B cell (primary cell): ENCODE measurements at regions of chr9 and their contacts with region 1.

Region 1: DNA sequence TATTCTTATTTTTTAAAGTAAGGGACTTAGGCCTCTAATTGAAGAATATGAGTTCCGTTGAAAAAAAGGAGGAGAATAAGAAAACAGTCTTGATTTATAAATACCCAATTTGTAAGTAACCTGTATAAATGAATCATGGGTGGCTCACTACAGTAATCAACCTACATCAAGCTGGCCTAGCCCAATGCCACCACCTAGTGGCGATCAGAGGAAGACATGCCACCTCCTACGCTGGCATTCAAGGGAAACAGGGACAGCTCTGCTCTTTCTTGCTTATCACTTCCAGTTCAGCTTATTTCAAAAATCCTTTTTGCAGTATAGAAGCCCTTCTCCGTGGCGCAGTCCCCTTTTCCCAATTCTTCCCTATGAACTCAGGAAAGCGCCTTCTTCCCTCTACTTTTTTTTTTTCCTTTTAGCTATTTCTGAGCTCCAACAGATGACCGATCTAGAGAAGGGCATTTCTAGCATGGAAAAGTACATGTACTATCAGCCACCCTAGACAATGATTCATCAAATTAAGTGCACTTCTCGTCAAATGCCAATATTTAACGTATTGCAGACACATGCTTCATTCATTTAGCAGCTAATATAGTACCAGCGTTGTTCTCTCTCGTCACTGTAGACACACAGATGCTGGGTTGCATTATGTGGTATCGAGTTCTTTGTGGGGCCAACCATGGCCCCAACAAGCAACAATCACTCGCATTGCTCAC is 28.3 kb downstream of the PTPN3 start:
- DNase-seq: peak; percentile 65
- ATAC-seq: peak; percentile 84
- H3K4me3 ChIP-seq: no peak overlapping the region
- H3K4me3 Mint-ChIP-seq: no peak overlapping the region
- H3K27ac ChIP-seq: no peak overlapping the region
- H3K27ac Mint-ChIP-seq: no peak overlapping the region
- H3K4me1 ChIP-seq: no peaks in the 10 kb centered on the region
- H3K4me1 Mint-ChIP-seq: no peaks in the 10 kb centered on the region
- H3K27me3 ChIP-seq: peaks cover 0 to 6% (median 4%) of the 10 kb centered on the region in 4 experiments
- H3K27me3 Mint-ChIP-seq: peaks cover 35% of the 10 kb centered on the region
- CTCF ChIP-seq: peak; percentile 93

Region 2: GRCh38 chr9:109244157-109245132 is 225.4 kb before region 1 on chr9:
- CTCF ChIA-PET with region 1: interaction called, 13 read pairs
- POLR2A ChIA-PET with region 1: no interaction called
- intact Hi-C with region 1: loop called (anchors 1 kb)
- DNase-seq: peak; percentile 72
- ATAC-seq: peak; percentile 81
- H3K4me3 ChIP-seq: no peak overlapping the region
- H3K4me3 Mint-ChIP-seq: no peak overlapping the region
- H3K27ac ChIP-seq: no peak overlapping the region
- H3K27ac Mint-ChIP-seq: no peak overlapping the region
- H3K4me1 ChIP-seq: no peaks in the 10 kb centered on the region
- H3K4me1 Mint-ChIP-seq: no peaks in the 10 kb centered on the region
- H3K27me3 ChIP-seq: peaks cover 0 to 19% (median 4%) of the 10 kb centered on the region in 4 experiments
- H3K27me3 Mint-ChIP-seq: peaks cover 22% of the 10 kb centered on the region
- CTCF ChIP-seq: peak; percentile 92

Region 3: GRCh38 chr9:109440797-109441287 is 29.0 kb before region 1 on chr9:
- CTCF ChIA-PET with region 1: interaction called, 7 read pairs
- POLR2A ChIA-PET with region 1: no interaction called
- intact Hi-C with region 1: loop called (anchors 1 kb)
- DNase-seq: peak; percentile 60
- ATAC-seq: peak; percentile 79
- H3K4me3 ChIP-seq: no peak overlapping the region
- H3K4me3 Mint-ChIP-seq: peak overlapping the region; percentile 32
- H3K27ac ChIP-seq: no peak overlapping the region
- H3K27ac Mint-ChIP-seq: peak overlapping the region; percentile 38
- H3K4me1 ChIP-seq: peaks cover 14 to 18% of the 10 kb centered on the region in 2 donors
- H3K4me1 Mint-ChIP-seq: peaks cover 18% of the 10 kb centered on the region
- H3K27me3 ChIP-seq: peaks cover 0 to 25% (median 6%) of the 10 kb centered on the region in 4 experiments
- H3K27me3 Mint-ChIP-seq: peaks cover 43% of the 10 kb centered on the region
- CTCF ChIP-seq: peak; percentile 60